ENCODE measurements at regions of chr9 and their contacts with region 1.

Region 1: DNA sequence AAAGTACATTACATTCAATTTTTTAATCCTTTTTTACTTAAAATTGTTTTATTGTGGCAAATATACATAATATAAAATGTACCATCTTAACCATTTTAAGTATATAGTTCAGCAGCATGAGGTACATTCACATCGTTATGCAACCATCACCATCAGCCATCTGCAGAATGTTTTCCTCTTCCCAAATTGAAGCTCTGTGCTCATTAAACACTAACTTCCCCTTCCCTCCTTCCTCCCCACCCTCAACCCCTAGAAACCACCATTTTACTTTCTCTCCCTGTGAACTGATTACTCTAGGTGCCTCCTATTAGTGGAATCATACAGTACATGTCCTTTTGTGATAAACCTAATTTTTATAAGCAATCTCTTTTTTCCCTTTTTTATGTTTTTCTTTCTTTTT is 15.6 kb downstream of the TEX53 start:
- DNase-seq: no peak
- ATAC-seq: no peak
- H3K4me3 ChIP-seq: no peak overlapping the region
- H3K27ac ChIP-seq: no peak overlapping the region
- H3K4me1 ChIP-seq: no peaks in the 10 kb centered on the region
- H3K27me3 ChIP-seq: no peaks in the 10 kb centered on the region
- CTCF ChIP-seq: no peak
- POLR2A ChIP-seq: no peak
- RAD21 ChIP-seq: no peak

Region 2: GRCh38 chr9:114434878-114435311 is 207.1 kb before region 1 on chr9:
- CTCF ChIA-PET with region 1: no interaction called
- POLR2A ChIA-PET with region 1: no interaction called
- dilution Hi-C with region 1: no loop called
- in situ Hi-C with region 1: loop called (anchors 10 kb)
- intact Hi-C with region 1: no loop called
- DNase-seq: peak; percentile 37
- ATAC-seq: peak; percentile 91
- H3K4me3 ChIP-seq: no peak overlapping the region
- H3K27ac ChIP-seq: no peak overlapping the region
- H3K4me1 ChIP-seq: no peaks in the 10 kb centered on the region
- H3K27me3 ChIP-seq: peaks cover 13% of the 10 kb centered on the region
- CTCF ChIP-seq: peak; percentile 69
- POLR2A ChIP-seq: no peak
- RAD21 ChIP-seq: peak; percentile 79